Activated B cell treated with CpG ODN at 0.5 μM for 24 hours (primary cell): ENCODE measurements at regions of chr17 and their contacts with region 1.

Region 1: DNA sequence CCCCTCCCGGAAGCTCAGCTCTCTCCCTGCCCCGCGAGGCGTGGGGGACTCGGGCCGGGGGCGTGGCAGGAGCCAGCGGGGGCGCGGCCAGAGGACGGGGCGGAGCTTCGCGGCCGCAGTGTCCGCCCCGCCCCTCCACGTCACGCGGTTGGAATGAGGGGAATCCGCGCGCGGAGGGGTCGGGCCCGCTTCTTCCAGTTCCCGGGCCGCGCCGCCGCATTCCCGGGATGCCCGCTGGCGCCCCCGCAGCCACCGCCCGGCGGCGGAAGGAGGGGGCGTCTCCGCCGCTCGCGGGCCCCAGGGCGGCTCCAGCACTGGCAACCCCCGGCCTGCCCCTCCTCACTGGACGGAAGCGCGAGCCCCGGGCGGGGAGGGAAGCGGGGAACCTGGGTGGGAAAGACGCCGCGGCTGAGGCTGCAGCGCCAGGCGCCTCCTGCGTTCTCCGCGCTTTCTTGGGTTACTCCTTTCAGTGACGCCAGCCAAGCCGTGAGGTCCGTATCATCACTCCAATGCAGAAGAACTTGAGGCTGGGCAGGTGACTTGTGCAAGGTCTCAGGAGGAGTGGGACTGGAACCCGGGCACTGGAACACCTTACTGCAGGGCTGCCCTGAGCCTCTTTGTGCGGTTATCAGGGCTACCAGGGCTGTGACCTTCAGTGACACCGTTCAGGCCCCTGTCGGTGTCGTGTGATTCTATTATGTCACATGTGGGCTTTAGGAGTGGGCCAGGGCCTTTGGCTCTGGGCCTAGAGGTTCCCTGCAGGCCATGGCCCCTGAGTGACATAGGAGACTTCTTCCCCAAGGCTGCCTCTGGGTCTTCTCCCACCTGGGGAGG is 4.2 kb downstream of the MYO1C start:
- DNase-seq: peak; percentile 85
- ATAC-seq: peak; percentile 19
- H3K4me3 Mint-ChIP-seq: peak overlapping the region; percentile 84
- H3K27ac Mint-ChIP-seq: peak overlapping the region; percentile 83
- H3K4me1 Mint-ChIP-seq: peaks cover 58% of the 10 kb centered on the region
- H3K27me3 Mint-ChIP-seq: no peaks in the 10 kb centered on the region
- CTCF ChIP-seq: no peak

Region 2: GRCh38 chr17:1399679-1400512 is 88.4 kb before region 1 on chr17 and contains the start of gene YWHAE:
- CTCF ChIA-PET with region 1: no interaction called
- POLR2A ChIA-PET with region 1: interaction called, 23 read pairs
- intact Hi-C with region 1: loop called (anchors 1 kb)
- DNase-seq: peak; percentile 94
- ATAC-seq: peak; percentile 85
- H3K4me3 Mint-ChIP-seq: peak within 1 kb of the TSS; percentile 98
- H3K27ac Mint-ChIP-seq: peak within 1 kb of the TSS; percentile 98
- H3K4me1 Mint-ChIP-seq: peaks cover 44% of the 10 kb centered on the region
- H3K27me3 Mint-ChIP-seq: no peaks in the 10 kb centered on the region
- CTCF ChIP-seq: no peak
- total RNA-seq, gene YWHAE: 253 and 263 TPM in 2 replicates

Region 3: DNA sequence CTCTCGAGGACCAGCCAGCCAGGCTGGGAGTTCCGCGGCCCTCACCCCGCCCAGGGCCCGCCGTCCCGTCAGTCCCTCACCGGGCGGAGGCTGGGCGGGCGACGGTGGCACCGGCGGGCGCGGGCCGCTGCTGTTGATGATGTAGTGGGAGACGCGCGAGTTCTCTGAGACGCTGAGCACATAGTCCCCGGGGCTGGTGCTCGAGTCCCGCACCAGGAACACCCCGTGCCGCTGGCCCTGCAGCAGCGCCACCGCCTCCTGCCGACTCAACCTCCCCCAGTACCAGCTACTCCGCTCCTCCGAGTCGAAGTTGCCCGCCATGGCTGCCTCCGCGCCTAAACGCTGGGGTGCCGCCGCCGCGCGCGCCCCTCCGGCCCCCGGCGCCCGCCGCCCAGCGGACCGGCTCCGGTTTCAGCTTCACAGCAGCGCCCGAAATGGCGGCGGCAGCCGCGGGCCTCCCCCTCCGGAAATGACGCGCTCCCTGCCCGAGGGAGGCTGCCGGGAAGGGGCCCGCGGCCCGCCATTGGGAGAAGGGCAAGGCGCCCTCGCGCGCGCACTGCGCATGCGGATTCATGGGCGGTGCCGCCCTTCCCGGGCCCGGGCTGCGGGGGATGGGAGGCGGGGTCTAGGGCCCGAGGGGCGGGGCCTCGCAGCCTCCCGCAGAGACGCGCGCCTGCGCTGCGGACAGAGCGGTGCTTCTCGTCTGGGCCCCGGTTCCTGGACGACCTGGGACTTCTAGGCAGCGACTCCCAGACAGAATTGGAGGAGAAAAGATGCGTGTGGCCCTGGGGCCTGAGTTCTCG is 32.2 kb before region 1 on chr17 and contains the start of gene CRK:
- CTCF ChIA-PET with region 1: interaction called, 3 read pairs
- POLR2A ChIA-PET with region 1: interaction called, 10 read pairs
- intact Hi-C with region 1: loop called (anchors 1 kb)
- DNase-seq: peak; percentile 99
- ATAC-seq: peak; percentile 92
- H3K4me3 Mint-ChIP-seq: peak within 1 kb of the TSS; percentile 94
- H3K27ac Mint-ChIP-seq: peak within 1 kb of the TSS; percentile 87
- H3K4me1 Mint-ChIP-seq: peaks cover 53% of the 10 kb centered on the region
- H3K27me3 Mint-ChIP-seq: no peaks in the 10 kb centered on the region
- CTCF ChIP-seq: no peak
- total RNA-seq, gene CRK: 22.5 and 29.1 TPM in 2 replicates

Region 4: GRCh38 chr17:1462287-1463112 is 25.7 kb before region 1 on chr17:
- CTCF ChIA-PET with region 1: interaction called, 4 read pairs
- POLR2A ChIA-PET with region 1: interaction called, 34 read pairs
- intact Hi-C with region 1: loop called (anchors 1 kb)
- DNase-seq: no peak
- ATAC-seq: no peak
- H3K4me3 Mint-ChIP-seq: peak overlapping the region; percentile 66
- H3K27ac Mint-ChIP-seq: peak overlapping the region; percentile 73
- H3K4me1 Mint-ChIP-seq: peaks cover 37% of the 10 kb centered on the region
- H3K27me3 Mint-ChIP-seq: no peaks in the 10 kb centered on the region
- CTCF ChIP-seq: no peak

Region 5: GRCh38 chr17:1474402-1475189 is 13.7 kb before region 1 on chr17:
- CTCF ChIA-PET with region 1: no interaction called
- POLR2A ChIA-PET with region 1: interaction called, 30 read pairs
- intact Hi-C with region 1: loop called (anchors 1 kb)
- DNase-seq: peak; percentile 58
- ATAC-seq: peak; percentile 64
- H3K4me3 Mint-ChIP-seq: peak overlapping the region; percentile 70
- H3K27ac Mint-ChIP-seq: peak overlapping the region; percentile 79
- H3K4me1 Mint-ChIP-seq: peaks cover 56% of the 10 kb centered on the region
- H3K27me3 Mint-ChIP-seq: no peaks in the 10 kb centered on the region
- CTCF ChIP-seq: no peak

Region 6: DNA sequence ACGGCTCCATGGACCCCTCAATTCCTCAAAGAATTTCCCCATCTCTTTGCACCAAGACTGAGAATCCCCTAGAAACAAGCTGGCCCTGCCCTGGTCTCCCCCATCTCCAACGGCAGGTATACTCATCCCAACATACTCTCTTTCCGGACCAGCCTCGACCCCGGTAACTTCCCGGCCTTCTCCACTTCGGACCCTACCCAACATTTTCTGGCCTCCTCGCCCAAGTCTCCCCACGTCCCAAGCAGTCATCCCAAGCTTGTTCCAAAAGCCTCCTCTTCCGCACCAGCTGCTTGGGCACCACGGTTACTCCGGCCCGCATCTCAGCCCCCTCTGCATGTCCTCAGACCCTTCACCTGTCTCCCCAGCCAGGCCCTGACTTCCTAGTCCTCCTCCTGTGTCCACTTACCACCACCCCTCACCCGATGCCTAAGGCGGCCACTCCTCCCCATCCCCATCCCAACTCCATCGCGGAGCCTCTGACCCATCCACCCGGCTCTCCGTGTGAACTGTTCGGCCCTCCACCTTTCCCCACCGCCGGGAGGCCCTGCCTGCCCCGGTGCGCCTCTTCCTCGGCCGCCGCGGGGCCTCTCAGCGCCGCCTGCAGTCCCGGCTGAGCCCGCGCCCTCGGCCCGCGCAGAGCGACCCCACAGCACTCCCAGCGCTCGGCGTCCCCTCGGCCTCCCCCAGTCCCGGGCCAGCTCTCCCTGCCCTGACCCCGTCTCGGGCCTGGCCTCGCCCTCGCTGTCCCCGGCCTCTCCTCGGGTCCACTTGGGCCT is 73.3 kb after region 1 on chr17:
- CTCF ChIA-PET with region 1: no interaction called
- POLR2A ChIA-PET with region 1: interaction called, 5 read pairs
- intact Hi-C with region 1: loop called (anchors 2 kb)
- DNase-seq: peak; percentile 54
- ATAC-seq: peak; percentile 26
- H3K4me3 Mint-ChIP-seq: peak overlapping the region; percentile 86
- H3K27ac Mint-ChIP-seq: peak overlapping the region; percentile 71
- H3K4me1 Mint-ChIP-seq: peaks cover 52% of the 10 kb centered on the region
- H3K27me3 Mint-ChIP-seq: no peaks in the 10 kb centered on the region
- CTCF ChIP-seq: no peak

Region 7: DNA sequence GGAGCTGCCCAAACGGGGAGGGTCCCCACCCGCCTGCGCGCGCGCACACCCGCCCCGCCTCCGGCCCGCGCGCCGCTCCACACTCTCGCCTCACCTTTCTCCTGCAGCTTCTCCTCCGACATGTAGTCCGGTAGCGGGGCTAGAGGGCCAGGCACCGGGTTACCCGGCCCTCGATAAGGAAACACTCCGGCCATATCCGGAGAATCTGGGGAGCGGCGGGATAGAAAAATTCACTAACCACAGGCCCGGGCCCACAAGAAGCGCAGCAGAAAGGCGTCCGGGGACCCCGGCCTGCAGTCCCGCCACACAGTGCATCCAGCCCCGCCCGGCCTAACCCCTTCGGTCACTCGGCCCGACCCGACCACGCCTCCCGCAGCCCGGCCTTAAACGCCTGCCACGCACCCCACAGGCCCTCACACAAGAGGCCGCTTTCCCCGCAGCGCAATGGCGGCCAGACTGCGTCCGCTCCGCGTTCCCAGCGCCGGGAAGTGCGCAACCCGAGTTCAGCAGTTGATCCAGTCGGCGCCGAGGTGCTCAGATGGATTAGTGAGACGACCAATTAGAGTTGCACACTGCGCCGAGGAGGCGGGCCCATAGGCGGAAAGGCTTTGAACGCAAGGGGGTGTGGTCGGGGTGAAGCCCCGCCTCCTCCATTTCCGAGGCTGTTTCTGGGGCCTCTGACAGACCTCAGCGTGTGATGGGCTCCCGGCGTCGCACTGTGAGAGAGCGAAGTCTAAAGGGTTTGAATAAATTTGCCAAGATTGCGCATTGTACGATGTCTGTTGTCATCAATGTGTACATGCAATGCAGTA is 196.3 kb after region 1 on chr17 and contains the start of gene PRPF8:
- CTCF ChIA-PET with region 1: no interaction called
- POLR2A ChIA-PET with region 1: no interaction called
- intact Hi-C with region 1: no loop called
- DNase-seq: peak; percentile 95
- ATAC-seq: peak; percentile 99
- H3K4me3 Mint-ChIP-seq: peak within 1 kb of the TSS; percentile 100
- H3K27ac Mint-ChIP-seq: peak within 1 kb of the TSS; percentile 96
- H3K4me1 Mint-ChIP-seq: peaks cover 33% of the 10 kb centered on the region
- H3K27me3 Mint-ChIP-seq: no peaks in the 10 kb centered on the region
- CTCF ChIP-seq: no peak
- total RNA-seq, gene PRPF8: 401 and 442 TPM in 2 replicates

Region 8: DNA sequence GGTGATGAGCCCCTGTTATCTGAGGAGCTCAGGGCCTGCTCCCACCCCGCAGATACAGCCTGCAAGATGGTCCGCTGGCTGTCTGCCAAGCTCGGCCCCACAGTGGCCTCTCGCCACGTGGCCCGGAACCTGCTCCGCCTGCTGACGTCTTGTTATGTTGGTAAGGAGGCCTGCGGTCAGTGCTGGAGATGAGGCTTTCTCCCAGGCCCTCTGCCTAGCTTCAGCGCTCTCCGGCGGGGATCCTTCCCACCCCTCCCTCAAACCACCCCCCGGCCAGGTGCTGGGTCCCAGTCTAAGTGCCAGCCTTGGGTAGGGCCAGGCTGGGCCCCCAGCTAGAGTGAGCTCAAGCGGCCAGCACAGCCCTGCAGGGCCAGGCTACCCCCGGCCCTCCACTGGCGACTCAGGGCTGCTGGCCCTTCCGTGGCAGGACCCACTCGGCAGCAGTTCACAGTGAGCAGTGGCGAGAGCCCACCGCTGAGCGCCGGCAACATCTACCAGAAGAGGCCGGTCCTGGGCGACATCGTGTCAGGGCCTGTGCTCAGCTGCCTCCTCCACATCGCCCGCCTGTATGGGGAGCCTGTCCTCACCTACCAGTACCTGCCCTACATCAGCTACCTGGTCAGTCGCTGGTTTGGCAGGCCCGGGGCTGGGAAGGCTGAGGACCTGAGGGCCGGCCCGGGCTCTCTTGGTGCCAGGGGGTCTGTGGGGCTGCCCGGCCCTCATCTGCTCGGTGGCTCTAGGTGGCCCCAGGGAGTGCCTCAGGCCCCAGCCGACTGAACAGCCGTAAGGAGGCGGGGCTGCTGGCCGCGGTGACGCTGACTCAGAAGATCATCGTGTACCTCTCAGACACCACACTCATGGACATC is 242.3 kb after region 1 on chr17:
- CTCF ChIA-PET with region 1: no interaction called
- POLR2A ChIA-PET with region 1: interaction called, 12 read pairs
- intact Hi-C with region 1: no loop called
- DNase-seq: no peak
- ATAC-seq: no peak
- H3K4me3 Mint-ChIP-seq: no peak overlapping the region
- H3K27ac Mint-ChIP-seq: peak overlapping the region; percentile 24
- H3K4me1 Mint-ChIP-seq: peaks cover 56% of the 10 kb centered on the region
- H3K27me3 Mint-ChIP-seq: no peaks in the 10 kb centered on the region
- CTCF ChIP-seq: no peak